ENCODE measurements at regions of chrX and their contacts with region 1.

Region 1: GRCh38 chrX:120664081-120664480 is 34.2 kb upstream of the C1GALT1C1 start:
- DNase-seq: peak in 3 of 14 experiments; percentile 29 to 43 (median 34)
- ATAC-seq: no peak
- H3K4me3 ChIP-seq: no peak overlapping the region
- H3K4me3 Mint-ChIP-seq: no peak overlapping the region
- H3K27ac ChIP-seq: no peak overlapping the region
- H3K27ac Mint-ChIP-seq: no peak overlapping the region
- H3K4me1 ChIP-seq: no peaks in the 10 kb centered on the region
- H3K4me1 Mint-ChIP-seq: no peaks in the 10 kb centered on the region
- H3K27me3 ChIP-seq: no peaks in the 10 kb centered on the region
- H3K27me3 Mint-ChIP-seq: no peaks in the 10 kb centered on the region
- CTCF ChIP-seq: no peak

Region 2: GRCh38 chrX:120036704-120037103 is 627.4 kb before region 1 on chrX:
- CTCF ChIA-PET with region 1: no interaction called
- POLR2A ChIA-PET with region 1: no interaction called
- intact Hi-C with region 1: no loop called
- DNase-seq: no peak
- ATAC-seq: no peak
- H3K4me3 ChIP-seq: no peak overlapping the region
- H3K4me3 Mint-ChIP-seq: no peak overlapping the region
- H3K27ac ChIP-seq: no peak overlapping the region
- H3K27ac Mint-ChIP-seq: no peak overlapping the region
- H3K4me1 ChIP-seq: no peaks in the 10 kb centered on the region
- H3K4me1 Mint-ChIP-seq: no peaks in the 10 kb centered on the region
- H3K27me3 ChIP-seq: no peaks in the 10 kb centered on the region
- H3K27me3 Mint-ChIP-seq: peaks cover 3% of the 10 kb centered on the region
- CTCF ChIP-seq: no peak

Region 3: GRCh38 chrX:120358737-120359456 is 305.2 kb before region 1 on chrX:
- CTCF ChIA-PET with region 1: no interaction called
- POLR2A ChIA-PET with region 1: no interaction called
- intact Hi-C with region 1: no loop called
- DNase-seq: no peak
- ATAC-seq: no peak
- H3K4me3 ChIP-seq: no peak overlapping the region
- H3K4me3 Mint-ChIP-seq: no peak overlapping the region
- H3K27ac ChIP-seq: no peak overlapping the region
- H3K27ac Mint-ChIP-seq: no peak overlapping the region
- H3K4me1 ChIP-seq: no peaks in the 10 kb centered on the region
- H3K4me1 Mint-ChIP-seq: no peaks in the 10 kb centered on the region
- H3K27me3 ChIP-seq: no peaks in the 10 kb centered on the region
- H3K27me3 Mint-ChIP-seq: no peaks in the 10 kb centered on the region
- CTCF ChIP-seq: no peak

Region 4: DNA sequence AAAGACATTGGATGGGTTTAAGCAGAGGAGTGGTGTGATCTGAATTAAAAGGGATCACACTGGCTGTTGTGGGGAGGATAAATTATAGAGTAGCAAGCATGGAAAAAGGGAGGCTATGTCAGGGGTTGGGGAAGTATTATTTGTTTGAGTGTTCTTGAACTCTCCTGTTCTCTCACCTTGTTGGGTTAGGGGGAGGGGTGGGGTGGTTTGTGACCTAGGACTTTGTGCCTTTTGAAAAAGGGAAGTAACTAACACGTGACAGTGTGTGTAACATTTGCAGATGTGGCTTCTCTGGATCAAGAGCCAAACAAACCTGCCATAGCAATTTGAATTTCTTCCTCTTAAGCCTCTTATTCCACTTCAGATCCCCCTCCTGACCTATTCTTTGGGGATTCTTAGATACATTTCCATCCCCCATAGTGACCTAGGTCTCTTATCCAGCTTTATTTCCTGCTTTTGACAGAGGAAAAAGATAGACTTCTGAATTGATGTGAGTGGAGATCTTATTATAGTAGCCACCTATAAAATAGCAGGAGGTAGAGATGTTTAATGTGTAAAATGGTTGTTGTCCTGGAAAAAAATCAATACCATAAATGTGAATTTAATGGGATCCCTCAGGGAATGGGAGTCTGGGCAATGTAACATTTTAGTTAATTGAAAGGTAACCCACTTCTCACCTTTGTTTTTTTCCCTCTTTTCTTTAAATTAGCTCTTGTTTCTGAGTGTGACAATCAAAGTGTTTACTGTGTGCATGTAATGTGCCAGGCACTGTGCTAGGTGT is 91.2 kb after region 1 on chrX:
- CTCF ChIA-PET with region 1: no interaction called
- POLR2A ChIA-PET with region 1: no interaction called
- intact Hi-C with region 1: loop called in 1 of 2 experiments (anchors 10 kb)
- DNase-seq: peak in 8 of 14 experiments; percentile 2 to 50 (median 21)
- ATAC-seq: peak; percentile 76
- H3K4me3 ChIP-seq: no peak overlapping the region
- H3K4me3 Mint-ChIP-seq: peak overlapping the region; percentile 0
- H3K27ac ChIP-seq: no peak overlapping the region
- H3K27ac Mint-ChIP-seq: peak overlapping the region; percentile 64
- H3K4me1 ChIP-seq: peaks cover 20% of the 10 kb centered on the region
- H3K4me1 Mint-ChIP-seq: peaks cover 48% of the 10 kb centered on the region
- H3K27me3 ChIP-seq: no peaks in the 10 kb centered on the region
- H3K27me3 Mint-ChIP-seq: no peaks in the 10 kb centered on the region
- CTCF ChIP-seq: no peak